ENCODE measurements at regions of chr5 and their contacts with region 1.

Region 1: GRCh38 chr5:7886849-7887475 is 18.0 kb downstream of the MTRR start:
- DNase-seq: no peak
- H3K4me3 ChIP-seq: no peak overlapping the region
- H3K27me3 ChIP-seq: no peaks in the 10 kb centered on the region
- CTCF ChIP-seq: peak; percentile 47

Region 2: DNA sequence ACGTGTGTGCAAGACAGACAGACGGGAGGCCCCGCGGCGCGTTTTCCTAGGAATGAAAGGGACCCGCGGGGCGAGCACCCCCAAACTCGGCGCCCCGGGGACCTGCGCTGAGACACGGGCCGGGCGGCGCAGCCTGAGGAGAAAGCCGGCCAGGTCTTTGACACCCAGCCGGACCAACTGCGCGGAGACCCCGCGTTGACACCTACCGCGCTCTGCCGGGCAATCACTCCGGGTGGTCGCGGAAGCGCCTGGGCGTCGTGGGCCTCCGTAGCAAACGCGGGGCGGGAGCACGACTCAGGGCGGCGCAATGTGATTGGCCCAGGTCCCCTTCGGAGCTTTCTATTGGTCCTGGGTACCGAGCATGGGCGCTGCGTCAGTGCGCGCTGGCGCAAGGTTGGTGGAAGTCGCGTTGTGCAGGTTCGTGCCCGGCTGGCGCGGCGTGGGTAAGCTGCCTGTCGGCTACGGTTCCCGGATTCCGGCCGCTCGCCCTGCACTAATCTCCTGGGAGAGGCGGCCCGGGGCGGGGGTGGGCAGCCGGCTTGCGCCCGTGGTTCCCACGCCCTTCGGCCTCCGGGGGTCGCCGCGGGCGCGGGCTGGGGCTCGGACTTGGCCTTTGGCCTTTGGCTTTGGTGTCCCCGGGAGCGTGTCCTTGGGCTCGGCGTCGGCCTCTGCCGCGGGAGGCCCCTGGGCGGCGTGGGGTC is 18.0 kb before region 1 on chr5 and contains the starts of genes FASTKD3 and MTRR:
- CTCF ChIA-PET with region 1: interaction called, 16 read pairs
- POLR2A ChIA-PET with region 1: no interaction called
- DNase-seq: peak; percentile 45
- H3K4me3 ChIP-seq: peak within 1 kb of the TSS; percentile 92
- H3K27me3 ChIP-seq: no peaks in the 10 kb centered on the region
- CTCF ChIP-seq: no peak
- polyA plus RNA-seq, gene FASTKD3: 5.6 and 9.2 TPM in 2 replicates
- polyA plus RNA-seq, gene MTRR: 58.6 and 65.4 TPM in 2 replicates

Region 3: DNA sequence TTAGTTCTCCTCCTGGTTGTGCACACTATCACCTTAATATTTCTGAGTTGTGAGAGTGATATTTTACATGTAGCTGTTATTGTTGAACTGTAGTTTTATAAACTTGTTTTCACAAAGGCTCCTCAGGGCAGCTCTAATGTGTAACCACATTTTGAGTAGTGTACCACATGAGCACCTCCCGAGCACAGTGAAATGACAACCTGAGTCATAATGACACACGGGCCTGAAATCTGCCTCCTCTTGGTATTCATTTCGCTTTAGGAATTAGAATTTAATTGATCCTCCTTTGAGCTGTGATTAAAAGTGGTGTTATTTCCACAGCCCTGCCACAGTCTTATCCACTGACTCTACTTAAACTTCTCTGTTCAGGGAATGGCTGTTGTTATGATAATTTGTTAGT is 10.1 kb before region 1 on chr5:
- CTCF ChIA-PET with region 1: interaction called, 16 read pairs
- POLR2A ChIA-PET with region 1: no interaction called
- DNase-seq: no peak
- H3K4me3 ChIP-seq: no peak overlapping the region
- H3K27me3 ChIP-seq: no peaks in the 10 kb centered on the region
- CTCF ChIP-seq: no peak

Region 4: GRCh38 chr5:7897014-7897632 is 10.2 kb after region 1 on chr5:
- CTCF ChIA-PET with region 1: interaction called, 12 read pairs
- POLR2A ChIA-PET with region 1: no interaction called
- DNase-seq: no peak
- H3K4me3 ChIP-seq: no peak overlapping the region
- H3K27me3 ChIP-seq: no peaks in the 10 kb centered on the region
- CTCF ChIP-seq: peak; percentile 40; the same call in 1 of the 2 replicates

Region 5: DNA sequence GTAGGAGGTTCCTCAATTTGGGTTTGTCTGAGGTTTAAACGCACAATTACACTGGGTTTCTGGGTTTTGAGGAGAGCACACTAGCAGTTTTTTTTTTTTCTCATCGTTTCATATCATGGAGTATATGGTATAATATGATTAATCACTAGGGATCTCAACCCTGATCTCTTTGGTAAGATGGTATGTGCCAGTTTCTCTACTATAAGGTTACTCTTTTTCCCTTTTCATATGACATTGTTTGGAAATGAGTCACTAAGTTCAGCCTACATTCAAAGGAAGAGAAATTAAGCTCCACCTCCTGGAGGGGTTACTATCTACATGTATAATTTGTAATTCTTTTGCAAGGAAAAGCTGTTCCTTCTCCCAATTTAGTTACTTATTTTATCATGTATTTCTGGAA is 17.2 kb after region 1 on chr5:
- CTCF ChIA-PET with region 1: interaction called, 12 read pairs
- POLR2A ChIA-PET with region 1: no interaction called
- DNase-seq: no peak
- H3K4me3 ChIP-seq: no peak overlapping the region
- H3K27me3 ChIP-seq: no peaks in the 10 kb centered on the region
- CTCF ChIP-seq: no peak

Region 6: GRCh38 chr5:7927466-7928375 is 40.8 kb after region 1 on chr5:
- CTCF ChIA-PET with region 1: interaction called, 16 read pairs
- POLR2A ChIA-PET with region 1: no interaction called
- DNase-seq: no peak
- H3K4me3 ChIP-seq: no peak overlapping the region
- H3K27me3 ChIP-seq: no peaks in the 10 kb centered on the region
- CTCF ChIP-seq: peak; percentile 84

Region 7: DNA sequence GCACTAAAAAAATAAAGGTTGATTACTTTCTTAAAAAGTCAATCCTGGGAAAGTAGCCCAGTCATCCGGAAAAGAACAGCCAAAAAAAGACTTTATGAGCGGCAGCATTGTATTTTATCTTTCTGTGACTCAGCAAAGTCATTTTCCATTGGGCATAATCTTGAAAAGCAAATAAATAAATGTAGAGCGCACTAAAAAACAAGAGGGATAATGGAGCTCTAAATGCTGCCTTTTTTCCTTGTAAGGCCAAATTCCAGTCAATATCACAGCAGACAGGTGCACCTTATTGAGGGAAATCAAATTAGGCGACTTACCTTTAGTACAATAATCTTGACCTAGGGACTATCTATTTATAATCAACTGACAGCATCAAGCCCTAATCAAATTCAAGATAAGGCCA is 248.8 kb after region 1 on chr5:
- CTCF ChIA-PET with region 1: no interaction called
- POLR2A ChIA-PET with region 1: no interaction called
- DNase-seq: no peak
- H3K4me3 ChIP-seq: no peak overlapping the region
- H3K27me3 ChIP-seq: no peaks in the 10 kb centered on the region
- CTCF ChIP-seq: no peak

Region 8: GRCh38 chr5:8176101-8176693 is 289.2 kb after region 1 on chr5:
- CTCF ChIA-PET with region 1: no interaction called
- POLR2A ChIA-PET with region 1: no interaction called
- DNase-seq: no peak
- H3K4me3 ChIP-seq: no peak overlapping the region
- H3K27me3 ChIP-seq: no peaks in the 10 kb centered on the region
- CTCF ChIP-seq: no peak